ENCODE measurements at regions of chr6 and their contacts with region 1.

Region 1: DNA sequence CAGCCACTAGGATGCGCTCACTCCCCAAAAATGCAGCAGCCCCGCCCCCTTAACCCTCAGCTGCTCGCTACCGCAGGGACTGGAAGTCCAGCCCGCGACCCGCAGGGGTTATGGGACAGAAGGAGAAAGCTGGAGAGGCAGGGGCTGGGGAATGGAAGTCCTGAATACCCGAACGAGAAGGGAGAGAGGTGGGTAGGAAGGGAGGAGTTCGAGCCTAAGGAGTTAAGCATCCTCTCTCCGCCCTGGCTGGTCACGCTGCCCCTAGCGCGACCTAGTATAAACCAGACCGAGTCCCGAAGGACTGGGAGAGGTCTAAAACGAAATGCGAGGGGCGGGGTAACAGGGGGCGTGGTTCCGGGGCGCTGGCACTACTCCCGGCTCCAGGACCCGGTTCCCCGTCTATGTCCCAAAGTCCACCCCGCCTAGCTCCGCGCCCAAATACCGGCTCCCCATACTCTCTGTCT is 448 bp upstream of the DDAH2 start:
- DNase-seq: peak; percentile 98

Region 2: DNA sequence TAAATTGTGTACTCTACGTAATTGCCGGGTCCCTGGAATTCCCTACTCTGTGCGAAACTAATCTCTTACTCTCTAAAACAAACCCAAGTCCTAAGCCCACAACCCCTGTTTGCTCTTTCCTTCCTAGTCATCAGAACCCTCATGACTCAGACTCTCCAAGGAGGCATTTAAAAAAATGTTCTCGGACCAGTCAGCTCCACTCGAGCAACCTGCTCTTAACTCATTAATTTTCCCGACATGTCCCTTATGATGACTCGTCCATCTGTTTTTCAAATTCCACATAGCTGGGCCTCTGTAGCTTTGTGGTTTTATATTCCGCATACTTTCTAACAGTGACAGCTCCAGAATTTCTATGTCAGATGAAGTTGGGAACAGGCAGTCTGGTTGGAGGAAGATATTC is 721.9 kb before region 1 on chr6:
- intact Hi-C with region 1: loop called in 1 of 2 experiments (anchors 10 kb)
- DNase-seq: no peak

Region 3: GRCh38 chr6:31665501-31666336 is 63.8 kb before region 1 on chr6 and contains the start of gene CSNK2B:
- intact Hi-C with region 1: no loop called
- DNase-seq: peak; percentile 99
- total RNA-seq, gene CSNK2B: 85.2 to 90.4 TPM

Region 4: GRCh38 chr6:31717499-31718222 is 11.9 kb before region 1 on chr6:
- intact Hi-C with region 1: loop called in 1 of 2 experiments (anchors 1 kb)
- DNase-seq: no peak